Endothelial cell of umbilical vein (primary cell): ENCODE measurements at regions of chr9 and their contacts with region 1.

Region 1: DNA sequence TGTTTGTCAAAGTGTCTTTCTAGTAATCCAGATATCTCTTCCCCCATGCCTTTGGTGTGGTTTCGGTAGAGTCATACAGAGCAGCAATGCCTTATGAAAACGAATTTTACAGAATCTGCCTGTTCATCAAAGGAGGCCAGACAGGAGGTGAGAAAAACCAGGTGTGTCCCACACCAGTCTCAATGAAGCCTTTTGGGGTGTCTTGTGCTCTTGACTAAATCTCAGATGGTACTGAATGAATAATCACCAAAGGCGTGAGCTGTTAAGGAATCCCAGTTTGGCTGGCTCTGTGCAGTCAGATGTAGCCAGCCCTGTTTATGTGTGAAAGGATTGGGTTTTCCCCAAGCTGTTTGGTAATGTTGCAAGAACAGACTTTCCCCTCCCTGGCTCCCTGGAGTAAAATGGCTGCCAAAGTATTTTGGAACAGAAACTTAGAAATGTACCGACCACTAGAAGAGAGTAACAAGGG is 70.8 kb upstream of the CDKN2B start:
- DNase-seq: no peak
- H3K4me3 ChIP-seq: no peak overlapping the region
- H3K27ac ChIP-seq: no peak overlapping the region
- H3K4me1 ChIP-seq: peaks cover 7% of the 10 kb centered on the region
- H3K27me3 ChIP-seq: no peaks in the 10 kb centered on the region
- CTCF ChIP-seq: no peak
- POLR2A ChIP-seq: no peak

Region 2: GRCh38 chr9:21883642-21884041 is 196.3 kb before region 1 on chr9:
- CTCF ChIA-PET with region 1: no interaction called
- POLR2A ChIA-PET with region 1: no interaction called
- dilution Hi-C with region 1: no loop called
- intact Hi-C with region 1: no loop called
- DNase-seq: no peak
- H3K4me3 ChIP-seq: no peak overlapping the region
- H3K27ac ChIP-seq: no peak overlapping the region
- H3K4me1 ChIP-seq: no peaks in the 10 kb centered on the region
- H3K27me3 ChIP-seq: no peaks in the 10 kb centered on the region
- CTCF ChIP-seq: no peak
- POLR2A ChIP-seq: no peak

Region 3: DNA sequence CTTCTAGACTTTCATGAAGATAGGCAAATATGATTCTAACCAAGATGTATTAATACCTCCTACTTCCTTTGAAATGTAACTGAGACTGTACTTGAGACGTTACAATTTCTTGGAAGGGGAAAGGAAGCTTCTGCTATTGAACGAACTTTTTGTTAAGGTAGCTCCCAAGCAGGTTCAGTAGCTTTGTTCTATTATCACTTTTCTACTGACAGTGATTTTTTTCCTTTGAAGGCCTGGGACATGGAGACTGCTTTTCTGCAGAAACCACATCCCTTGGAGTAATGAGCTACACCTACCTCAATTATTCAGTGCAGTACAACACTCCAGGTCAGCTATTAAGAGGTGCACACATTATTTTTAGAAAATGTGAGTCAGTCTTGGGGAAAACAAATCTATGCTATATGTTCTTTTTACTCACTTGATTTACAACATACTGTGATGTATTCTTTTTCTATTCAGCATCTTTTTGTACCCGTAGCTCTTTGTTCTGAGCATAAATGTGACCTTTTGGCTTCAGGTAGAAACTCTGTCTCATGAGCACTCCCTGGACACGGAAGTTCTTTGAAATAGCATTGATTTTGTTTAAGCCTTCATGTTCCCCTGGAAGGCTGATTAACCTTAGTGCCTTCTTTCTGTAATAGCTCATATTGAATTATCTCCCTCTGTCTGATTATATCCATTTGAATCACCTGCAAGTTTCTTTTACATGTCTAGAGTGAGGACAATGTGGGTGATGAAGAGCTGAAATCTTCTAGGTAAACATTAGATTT is 14.3 kb before region 1 on chr9:
- CTCF ChIA-PET with region 1: interaction called, 11 read pairs
- POLR2A ChIA-PET with region 1: no interaction called
- dilution Hi-C with region 1: no loop called
- intact Hi-C with region 1: no loop called
- DNase-seq: no peak
- H3K4me3 ChIP-seq: no peak overlapping the region
- H3K27ac ChIP-seq: no peak overlapping the region
- H3K4me1 ChIP-seq: no peaks in the 10 kb centered on the region
- H3K27me3 ChIP-seq: no peaks in the 10 kb centered on the region
- CTCF ChIP-seq: no peak
- POLR2A ChIP-seq: no peak